ENCODE measurements at regions of chr10 and their contacts with region 1.

Region 1: GRCh38 chr10:69408318-69409175 is 8.2 kb downstream of the TACR2 start:
- DNase-seq: peak; percentile 83
- ATAC-seq: peak; percentile 82
- H3K4me3 Mint-ChIP-seq: peak overlapping the region; percentile 69
- H3K27ac Mint-ChIP-seq: peak overlapping the region; percentile 83
- H3K4me1 Mint-ChIP-seq: peaks cover 28% of the 10 kb centered on the region
- H3K27me3 Mint-ChIP-seq: no peaks in the 10 kb centered on the region
- CTCF ChIP-seq: no peak

Region 2: DNA sequence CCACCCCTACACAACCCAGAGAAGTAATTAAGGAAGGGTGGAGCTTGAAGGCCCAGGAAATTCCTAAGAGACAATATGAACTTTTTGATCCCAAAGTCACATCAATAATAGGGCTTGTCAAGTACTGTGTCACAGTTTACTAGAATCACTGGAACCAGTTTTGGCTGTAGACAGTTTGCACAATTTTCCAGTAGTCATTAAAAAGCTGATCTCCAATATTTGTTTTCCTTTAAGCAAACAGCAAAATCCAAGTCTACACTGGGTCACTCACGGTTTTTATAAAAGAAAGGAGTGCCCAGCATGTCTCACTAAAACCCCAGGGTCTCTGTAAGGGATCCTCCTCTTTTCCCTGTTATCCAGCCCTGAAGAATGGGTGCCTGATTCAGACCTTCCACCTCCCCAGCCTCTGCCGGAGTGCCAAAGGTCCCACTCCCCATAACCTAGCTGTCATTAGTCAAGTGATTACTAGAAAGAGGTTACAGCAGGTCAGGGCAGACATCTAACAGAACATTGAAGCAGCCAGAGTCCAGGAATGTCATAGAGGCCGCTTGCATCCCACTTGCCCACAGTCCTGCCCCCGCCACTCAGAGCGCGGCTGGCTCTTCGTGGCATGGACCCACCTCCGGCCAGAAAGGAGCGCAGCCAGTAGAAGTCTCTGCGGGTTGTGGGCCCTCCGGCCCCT is 881.8 kb before region 1 on chr10:
- CTCF ChIA-PET with region 1: no interaction called
- POLR2A ChIA-PET with region 1: no interaction called
- intact Hi-C with region 1: loop called (anchors 5 kb)
- DNase-seq: no peak
- ATAC-seq: no peak
- H3K4me3 Mint-ChIP-seq: peak overlapping the region; percentile 86
- H3K27ac Mint-ChIP-seq: peak overlapping the region; percentile 73
- H3K4me1 Mint-ChIP-seq: peaks cover 14% of the 10 kb centered on the region
- H3K27me3 Mint-ChIP-seq: no peaks in the 10 kb centered on the region
- CTCF ChIP-seq: no peak

Region 3: GRCh38 chr10:69004821-69005220 is 403.7 kb before region 1 on chr10:
- CTCF ChIA-PET with region 1: no interaction called
- POLR2A ChIA-PET with region 1: no interaction called
- intact Hi-C with region 1: loop called (anchors 5 kb)
- DNase-seq: no peak
- ATAC-seq: peak; percentile 71
- H3K4me3 Mint-ChIP-seq: no peak overlapping the region
- H3K27ac Mint-ChIP-seq: no peak overlapping the region
- H3K4me1 Mint-ChIP-seq: no peaks in the 10 kb centered on the region
- H3K27me3 Mint-ChIP-seq: no peaks in the 10 kb centered on the region
- CTCF ChIP-seq: no peak

Region 4: GRCh38 chr10:69179743-69180524 is 228.6 kb before region 1 on chr10 and contains the start of gene SUPV3L1:
- CTCF ChIA-PET with region 1: no interaction called
- POLR2A ChIA-PET with region 1: interaction called, 6 read pairs
- intact Hi-C with region 1: loop called (anchors 1 kb)
- DNase-seq: peak; percentile 87
- ATAC-seq: peak; percentile 87
- H3K4me3 Mint-ChIP-seq: peak within 1 kb of the TSS; percentile 95
- H3K27ac Mint-ChIP-seq: peak within 1 kb of the TSS; percentile 100
- H3K4me1 Mint-ChIP-seq: peaks cover 39% of the 10 kb centered on the region
- H3K27me3 Mint-ChIP-seq: no peaks in the 10 kb centered on the region
- CTCF ChIP-seq: no peak
- total RNA-seq, gene SUPV3L1: 38.7 and 49.1 TPM in 2 replicates

Region 5: DNA sequence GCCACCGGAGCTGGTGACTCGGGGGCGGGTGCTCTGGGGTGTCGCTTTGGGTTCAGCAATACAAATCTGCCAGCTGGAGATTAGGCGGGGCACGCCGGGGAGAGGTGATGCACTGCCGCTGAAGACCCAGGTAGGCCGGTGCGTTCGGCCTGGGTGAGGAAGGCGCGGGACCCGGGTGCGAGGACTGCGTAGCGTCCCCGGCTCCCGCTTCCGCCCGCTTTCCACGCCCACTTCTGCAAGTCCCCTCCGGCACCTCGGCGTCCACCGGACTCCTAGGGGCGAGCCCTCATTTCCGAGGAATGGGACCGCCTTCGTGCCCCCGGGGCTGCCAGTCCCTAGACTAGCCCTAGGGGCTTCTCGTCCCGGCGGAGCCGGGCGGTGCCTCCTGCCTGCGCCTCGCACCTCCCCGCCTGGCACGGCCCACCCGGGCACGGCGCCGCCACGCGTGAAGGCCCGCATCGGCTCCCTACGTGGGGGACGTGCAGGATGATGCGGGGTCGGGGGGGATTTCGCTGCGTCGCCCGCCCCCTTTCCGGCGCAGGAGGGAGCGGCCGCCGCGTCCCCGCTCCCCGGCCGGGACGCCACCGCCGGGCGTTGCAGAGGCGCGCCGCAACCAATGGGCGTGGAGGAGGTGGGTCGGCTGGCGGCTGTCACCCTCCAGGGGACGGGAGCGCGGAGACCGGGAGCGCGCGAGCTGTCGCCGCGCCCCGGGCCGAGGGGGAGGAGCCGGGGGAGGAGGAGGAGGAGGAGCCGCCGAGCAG is 90.3 kb before region 1 on chr10:
- CTCF ChIA-PET with region 1: no interaction called
- POLR2A ChIA-PET with region 1: interaction called, 12 read pairs
- intact Hi-C with region 1: loop called (anchors 1 kb)
- DNase-seq: peak; percentile 87
- ATAC-seq: peak; percentile 93
- H3K4me3 Mint-ChIP-seq: peak overlapping the region; percentile 92
- H3K27ac Mint-ChIP-seq: peak overlapping the region; percentile 82
- H3K4me1 Mint-ChIP-seq: peaks cover 40% of the 10 kb centered on the region
- H3K27me3 Mint-ChIP-seq: no peaks in the 10 kb centered on the region
- CTCF ChIP-seq: no peak

Region 6: GRCh38 chr10:69451209-69451783 is 42.7 kb after region 1 on chr10 and contains the start of gene TSPAN15:
- CTCF ChIA-PET with region 1: no interaction called
- POLR2A ChIA-PET with region 1: no interaction called
- intact Hi-C with region 1: loop called (anchors 1 kb)
- DNase-seq: peak; percentile 40
- ATAC-seq: peak; percentile 93
- H3K4me3 Mint-ChIP-seq: peak within 1 kb of the TSS; percentile 83
- H3K27ac Mint-ChIP-seq: no peak within 1 kb of the TSS
- H3K4me1 Mint-ChIP-seq: peaks cover 14% of the 10 kb centered on the region
- H3K27me3 Mint-ChIP-seq: peaks cover 25% of the 10 kb centered on the region
- CTCF ChIP-seq: no peak
- total RNA-seq, gene TSPAN15: 0.35 TPM in 1 of 2 replicates, not detected in the other

Region 7: GRCh38 chr10:70169649-70170364 is 761.3 kb after region 1 on chr10:
- CTCF ChIA-PET with region 1: no interaction called
- POLR2A ChIA-PET with region 1: no interaction called
- intact Hi-C with region 1: loop called (anchors 1 kb)
- DNase-seq: no peak
- ATAC-seq: peak; percentile 29
- H3K4me3 Mint-ChIP-seq: peak overlapping the region; percentile 94
- H3K27ac Mint-ChIP-seq: peak overlapping the region; percentile 93
- H3K4me1 Mint-ChIP-seq: peaks cover 43% of the 10 kb centered on the region
- H3K27me3 Mint-ChIP-seq: no peaks in the 10 kb centered on the region
- CTCF ChIP-seq: no peak